BJ (cell line): ENCODE measurements at regions of chr17 and their contacts with region 1.

Region 1: GRCh38 chr17:41966463-41967140 is at the start of gene CNP:
- DNase-seq: no peak
- H3K4me3 ChIP-seq: peak within 1 kb of the TSS; percentile 92
- H3K27me3 ChIP-seq: no peaks in the 10 kb centered on the region
- CTCF ChIP-seq: no peak
- polyA plus RNA-seq, gene CNP: 53.5 and 66.2 TPM in 2 replicates

Region 2: GRCh38 chr17:41944943-41945342 is 21.7 kb before region 1 on chr17:
- CTCF ChIA-PET with region 1: interaction called, 12 read pairs
- POLR2A ChIA-PET with region 1: no interaction called
- DNase-seq: no peak
- H3K4me3 ChIP-seq: no peak overlapping the region
- H3K27me3 ChIP-seq: no peaks in the 10 kb centered on the region
- CTCF ChIP-seq: no peak

Region 3: DNA sequence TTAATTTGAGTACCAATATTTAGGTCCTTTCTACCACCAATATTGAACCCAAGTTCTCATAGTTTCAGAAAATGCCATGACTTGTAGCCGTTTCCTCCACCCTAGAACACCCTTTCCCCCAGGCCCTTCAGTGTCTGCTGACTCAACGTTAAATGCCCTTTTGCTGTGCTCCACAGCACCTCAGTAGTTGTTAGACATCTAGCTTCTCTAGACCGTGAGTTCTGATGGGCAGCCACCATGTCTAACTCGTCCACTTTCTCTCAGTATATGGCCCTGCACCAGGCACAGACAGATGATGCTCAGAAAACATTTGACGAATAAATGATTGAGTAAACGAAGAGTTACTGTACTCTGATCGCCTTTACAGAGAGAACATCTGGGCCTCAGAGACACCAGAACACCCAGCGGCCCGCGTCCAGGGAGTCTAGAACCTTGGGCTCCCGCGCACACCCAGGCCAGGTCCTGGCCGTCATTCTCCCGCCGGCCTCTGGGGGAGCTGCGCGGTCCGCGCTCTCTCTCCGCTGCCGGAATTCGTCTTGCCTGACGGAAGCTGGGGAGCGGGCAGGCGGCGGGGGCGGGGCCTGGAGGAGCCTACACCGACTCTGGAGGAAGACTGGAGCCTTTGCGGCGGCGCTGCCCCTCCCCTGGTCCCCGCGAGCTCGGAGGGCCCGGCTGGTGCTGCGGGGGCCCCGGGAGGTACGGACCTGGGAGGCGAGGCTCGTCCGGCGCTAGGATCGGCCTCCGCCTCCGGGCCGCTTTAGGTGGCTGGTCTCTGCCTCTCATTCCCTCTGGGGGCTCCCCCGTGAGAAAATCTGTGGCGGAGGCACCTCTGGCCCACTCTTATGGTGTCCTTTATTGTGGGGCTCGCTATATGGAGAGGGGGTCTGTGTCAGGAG is 53.2 kb after region 1 on chr17 and contains the start of gene NKIRAS2:
- CTCF ChIA-PET with region 1: interaction called, 59 read pairs
- POLR2A ChIA-PET with region 1: interaction called, 10 read pairs
- DNase-seq: peak; percentile 34
- H3K4me3 ChIP-seq: peak within 1 kb of the TSS; percentile 76
- H3K27me3 ChIP-seq: no peaks in the 10 kb centered on the region
- CTCF ChIP-seq: peak; percentile 92
- polyA plus RNA-seq, gene NKIRAS2: 55.9 and 81.4 TPM in 2 replicates

Region 4: DNA sequence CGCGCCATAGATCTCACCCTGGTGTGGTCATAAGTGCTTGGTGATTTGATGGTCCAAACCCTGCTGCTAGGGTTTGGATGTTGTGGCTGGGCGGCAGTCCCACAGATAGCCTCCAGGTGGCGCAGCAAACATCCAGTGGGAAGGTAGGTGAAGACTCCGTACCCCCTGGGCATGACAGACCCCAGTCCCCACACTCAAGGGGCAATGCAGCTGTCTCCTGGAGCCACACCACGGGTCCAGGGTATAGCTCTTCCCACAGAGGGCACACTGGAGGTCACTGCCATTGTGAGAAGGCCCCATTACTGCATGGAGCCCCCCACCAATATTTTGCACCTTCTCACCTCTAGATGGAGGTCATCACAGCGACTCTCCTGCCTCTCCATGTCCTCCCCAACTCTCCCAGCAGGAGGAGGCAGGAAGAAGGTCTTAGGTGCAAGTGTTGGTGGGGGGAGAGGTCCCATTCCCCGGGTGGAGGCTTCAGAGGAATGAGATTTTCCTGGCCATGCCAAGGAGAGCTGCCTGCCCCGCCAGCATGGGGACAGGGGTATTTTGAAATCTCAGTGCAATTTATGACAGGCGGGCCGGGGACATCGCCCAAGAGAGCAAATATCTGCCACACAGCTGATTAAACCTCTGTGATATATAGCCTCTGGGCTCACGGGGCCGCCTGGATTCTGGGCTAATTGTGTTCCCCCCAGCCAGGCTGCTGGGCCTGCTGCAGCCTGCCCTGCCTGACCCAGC is 100.9 kb after region 1 on chr17:
- CTCF ChIA-PET with region 1: interaction called, 16 read pairs
- POLR2A ChIA-PET with region 1: no interaction called
- DNase-seq: no peak
- H3K4me3 ChIP-seq: no peak overlapping the region
- H3K27me3 ChIP-seq: peaks cover 13% of the 10 kb centered on the region
- CTCF ChIP-seq: peak; percentile 84

Region 5: GRCh38 chr17:42101513-42102319 is 135.1 kb after region 1 on chr17:
- CTCF ChIA-PET with region 1: interaction called, 11 read pairs
- POLR2A ChIA-PET with region 1: no interaction called
- DNase-seq: no peak
- H3K4me3 ChIP-seq: no peak overlapping the region
- H3K27me3 ChIP-seq: peaks cover 12% of the 10 kb centered on the region
- CTCF ChIP-seq: peak; percentile 87

Region 6: GRCh38 chr17:42120770-42121769 is 154.5 kb after region 1 on chr17 and contains the start of gene KAT2A:
- CTCF ChIA-PET with region 1: interaction called, 163 read pairs
- POLR2A ChIA-PET with region 1: no interaction called
- DNase-seq: no peak
- H3K4me3 ChIP-seq: peak within 1 kb of the TSS; percentile 69
- H3K27me3 ChIP-seq: no peaks in the 10 kb centered on the region
- CTCF ChIP-seq: no peak
- polyA plus RNA-seq, gene KAT2A: 18.2 and 25.2 TPM in 2 replicates